ENCODE measurements at regions of chr10 and their contacts with region 1.

Region 1: GRCh38 chr10:67697724-67698131 is 1.7 kb upstream of the CTNNA3 start:
- DNase-seq: peak in 3 of 5 donors; percentile 2 to 49 (median 34)
- H3K4me3 ChIP-seq: no peak overlapping the region
- H3K4me3 Mint-ChIP-seq: no peak overlapping the region
- H3K27ac ChIP-seq: no peak overlapping the region
- H3K27ac Mint-ChIP-seq: no peak overlapping the region
- H3K4me1 ChIP-seq: no peaks in the 10 kb centered on the region
- H3K4me1 Mint-ChIP-seq: peaks cover 2 to 11% (median 5%) of the 10 kb centered on the region in 3 donors
- H3K27me3 ChIP-seq: peaks cover 6% of the 10 kb centered on the region
- H3K27me3 Mint-ChIP-seq: peaks cover 15 to 52% of the 10 kb centered on the region in 2 donors

Region 2: GRCh38 chr10:67550838-67551402 is 146.8 kb before region 1 on chr10:
- CTCF ChIA-PET with region 1: no interaction called
- POLR2A ChIA-PET with region 1: no interaction called
- DNase-seq: no peak
- H3K4me3 ChIP-seq: no peak overlapping the region
- H3K4me3 Mint-ChIP-seq: no peak overlapping the region
- H3K27ac ChIP-seq: no peak overlapping the region
- H3K27ac Mint-ChIP-seq: no peak overlapping the region
- H3K4me1 ChIP-seq: no peaks in the 10 kb centered on the region
- H3K4me1 Mint-ChIP-seq: no peaks in the 10 kb centered on the region
- H3K27me3 ChIP-seq: no peaks in the 10 kb centered on the region
- H3K27me3 Mint-ChIP-seq: peaks cover 0 to 4% of the 10 kb centered on the region in 2 donors

Region 3: GRCh38 chr10:67735430-67735829 is 37.7 kb after region 1 on chr10:
- CTCF ChIA-PET with region 1: no interaction called
- POLR2A ChIA-PET with region 1: no interaction called
- DNase-seq: no peak
- H3K4me3 ChIP-seq: no peak overlapping the region
- H3K4me3 Mint-ChIP-seq: no peak overlapping the region
- H3K27ac ChIP-seq: no peak overlapping the region
- H3K27ac Mint-ChIP-seq: no peak overlapping the region
- H3K4me1 ChIP-seq: no peaks in the 10 kb centered on the region
- H3K4me1 Mint-ChIP-seq: peaks cover 0 to 12% (median 0%) of the 10 kb centered on the region in 3 donors
- H3K27me3 ChIP-seq: no peaks in the 10 kb centered on the region
- H3K27me3 Mint-ChIP-seq: peaks cover 0 to 28% of the 10 kb centered on the region in 2 donors

Region 4: DNA sequence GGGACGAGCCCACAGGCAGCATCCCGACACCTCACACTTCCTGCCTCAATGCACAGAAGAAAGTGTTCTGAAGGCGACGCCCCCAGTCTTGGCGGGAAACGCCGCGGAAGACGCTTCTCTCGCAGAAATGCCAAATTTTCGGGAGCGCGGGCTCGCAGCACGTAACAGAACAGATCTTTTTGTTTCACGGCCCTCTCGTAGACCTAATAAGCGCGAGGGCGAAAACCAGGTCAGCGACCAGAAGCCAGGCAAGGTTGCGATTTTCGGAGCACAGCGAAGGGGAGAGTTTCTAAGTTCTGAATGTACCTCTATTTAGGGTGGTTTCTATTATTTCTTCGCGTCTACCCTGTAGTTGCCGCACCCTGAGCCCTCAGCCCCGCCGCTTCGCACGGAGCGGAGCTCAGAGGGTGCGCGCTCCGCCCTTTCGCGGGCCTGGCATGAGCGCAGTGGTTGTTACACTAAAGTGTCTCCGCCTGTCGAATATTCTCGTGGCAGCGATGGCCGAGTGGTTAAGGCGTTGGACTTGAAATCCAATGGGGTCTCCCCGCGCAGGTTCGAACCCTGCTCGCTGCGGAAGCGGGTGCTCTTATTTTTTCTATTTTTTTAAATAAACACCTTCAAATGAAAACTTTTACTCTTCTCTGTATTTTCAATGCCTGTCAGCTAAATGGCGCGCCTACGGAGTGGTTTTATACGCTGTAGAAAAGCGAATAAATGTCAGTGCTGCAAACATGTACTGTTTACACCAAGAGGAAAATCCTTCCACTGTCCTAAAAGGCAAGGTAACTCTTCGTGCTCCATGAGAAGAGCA is 66.5 kb after region 1 on chr10:
- CTCF ChIA-PET with region 1: interaction called, 10 read pairs
- POLR2A ChIA-PET with region 1: interaction called, 6 read pairs
- DNase-seq: peak; percentile 90 to 98 (median 96)
- H3K4me3 ChIP-seq: peak overlapping the region; percentile 98
- H3K4me3 Mint-ChIP-seq: peak overlapping the region; percentile 87 to 97 (median 92)
- H3K27ac ChIP-seq: peak overlapping the region; percentile 86
- H3K27ac Mint-ChIP-seq: peak overlapping the region; percentile 94 to 99 (median 98)
- H3K4me1 ChIP-seq: peaks cover 10% of the 10 kb centered on the region
- H3K4me1 Mint-ChIP-seq: peaks cover 12 to 14% (median 14%) of the 10 kb centered on the region in 3 donors
- H3K27me3 ChIP-seq: no peaks in the 10 kb centered on the region
- H3K27me3 Mint-ChIP-seq: peaks cover 4 to 14% of the 10 kb centered on the region in 2 donors

Region 5: DNA sequence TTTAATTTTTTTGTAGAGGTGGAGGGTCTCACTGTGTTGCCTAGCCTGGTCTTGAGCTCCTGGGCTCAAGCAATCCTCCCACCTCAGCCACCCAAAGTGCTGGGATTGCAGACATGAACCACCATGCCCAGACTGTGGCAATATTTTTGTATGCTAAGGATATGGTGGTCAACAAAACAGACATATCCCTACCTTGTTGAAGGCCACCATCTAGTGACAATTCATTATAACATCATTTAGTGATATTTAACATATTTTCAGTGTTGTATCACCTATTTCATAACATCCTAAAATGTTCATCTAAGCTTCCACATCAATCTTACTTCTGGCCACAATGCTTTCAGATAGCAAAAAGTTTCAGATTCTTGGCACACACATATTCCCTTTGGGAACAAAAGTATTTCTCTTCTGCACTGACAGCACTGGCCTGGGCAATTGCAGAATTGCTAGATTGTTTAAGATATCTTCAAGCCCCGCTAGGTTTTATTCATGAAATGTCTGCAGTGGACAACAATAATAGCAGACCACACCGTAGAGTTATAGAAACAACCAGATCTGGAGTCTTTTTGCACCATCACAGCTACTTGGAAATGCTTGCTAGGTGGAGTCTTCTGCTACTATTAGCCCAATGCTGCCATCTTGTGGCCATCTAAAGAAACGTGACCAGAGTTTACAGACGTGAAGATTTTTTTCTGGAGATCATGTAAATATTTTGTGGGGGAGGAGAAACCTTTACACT is 81.9 kb after region 1 on chr10:
- CTCF ChIA-PET with region 1: interaction called, 127 read pairs
- POLR2A ChIA-PET with region 1: interaction called, 4 read pairs
- DNase-seq: peak; percentile 43 to 78 (median 68)
- H3K4me3 ChIP-seq: no peak overlapping the region
- H3K4me3 Mint-ChIP-seq: no peak overlapping the region
- H3K27ac ChIP-seq: no peak overlapping the region
- H3K27ac Mint-ChIP-seq: no peak overlapping the region
- H3K4me1 ChIP-seq: peaks cover 7% of the 10 kb centered on the region
- H3K4me1 Mint-ChIP-seq: peaks cover 13 to 26% (median 23%) of the 10 kb centered on the region in 3 donors
- H3K27me3 ChIP-seq: no peaks in the 10 kb centered on the region
- H3K27me3 Mint-ChIP-seq: no peaks in the 10 kb centered on the region

Region 6: DNA sequence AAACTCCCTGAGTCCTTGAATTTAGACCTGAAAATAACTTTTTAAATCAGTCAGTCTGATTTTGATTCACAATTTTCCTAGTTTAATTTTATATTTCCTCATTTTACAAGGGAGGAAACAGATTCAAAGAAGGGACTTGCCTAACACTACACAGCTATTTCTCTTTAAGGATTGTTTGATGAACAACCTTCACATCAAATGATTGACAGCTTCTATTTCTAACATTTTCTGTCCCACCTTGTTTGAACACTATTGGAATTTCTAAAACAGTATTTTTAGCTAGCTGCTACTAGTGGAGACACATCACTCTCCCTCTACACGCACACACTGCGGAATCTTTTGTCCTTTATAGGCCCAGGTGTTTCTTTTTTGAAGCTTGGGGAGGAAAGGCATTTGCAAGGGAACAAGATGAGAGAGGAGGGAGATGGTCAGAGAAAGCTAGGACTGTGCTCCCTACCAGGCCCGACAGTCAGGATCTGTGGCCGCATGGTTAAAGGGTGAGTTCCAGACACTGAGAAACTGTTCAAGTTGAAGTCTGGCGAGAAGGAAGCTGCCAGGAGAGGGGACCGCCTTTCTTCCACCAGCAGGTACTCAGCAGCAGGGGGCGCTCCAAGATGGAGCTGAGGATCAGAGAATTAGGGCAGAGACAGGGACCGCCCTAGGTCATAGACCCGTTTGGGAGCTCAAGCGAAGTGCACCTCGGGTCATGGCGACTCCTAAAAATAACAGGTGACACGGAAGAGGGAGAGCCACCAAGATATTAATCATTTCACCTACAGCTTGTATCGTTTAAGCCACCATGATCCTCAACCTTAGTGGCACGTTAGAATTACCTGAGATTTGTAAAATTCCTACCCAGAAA is 90.5 kb after region 1 on chr10:
- CTCF ChIA-PET with region 1: interaction called, 20 read pairs
- POLR2A ChIA-PET with region 1: no interaction called
- DNase-seq: peak; percentile 29 to 77 (median 52)
- H3K4me3 ChIP-seq: no peak overlapping the region
- H3K4me3 Mint-ChIP-seq: peak overlapping the region in 1 of 7 donors; percentile 10
- H3K27ac ChIP-seq: no peak overlapping the region
- H3K27ac Mint-ChIP-seq: peak overlapping the region in 2 of 8 donors; percentile 19 to 68
- H3K4me1 ChIP-seq: peaks cover 5% of the 10 kb centered on the region
- H3K4me1 Mint-ChIP-seq: peaks cover 15 to 43% (median 33%) of the 10 kb centered on the region in 3 donors
- H3K27me3 ChIP-seq: no peaks in the 10 kb centered on the region
- H3K27me3 Mint-ChIP-seq: no peaks in the 10 kb centered on the region